Astrocyte of the cerebellum (primary cell): ENCODE measurements at regions of chr10 and their contacts with region 1.

Region 1: DNA sequence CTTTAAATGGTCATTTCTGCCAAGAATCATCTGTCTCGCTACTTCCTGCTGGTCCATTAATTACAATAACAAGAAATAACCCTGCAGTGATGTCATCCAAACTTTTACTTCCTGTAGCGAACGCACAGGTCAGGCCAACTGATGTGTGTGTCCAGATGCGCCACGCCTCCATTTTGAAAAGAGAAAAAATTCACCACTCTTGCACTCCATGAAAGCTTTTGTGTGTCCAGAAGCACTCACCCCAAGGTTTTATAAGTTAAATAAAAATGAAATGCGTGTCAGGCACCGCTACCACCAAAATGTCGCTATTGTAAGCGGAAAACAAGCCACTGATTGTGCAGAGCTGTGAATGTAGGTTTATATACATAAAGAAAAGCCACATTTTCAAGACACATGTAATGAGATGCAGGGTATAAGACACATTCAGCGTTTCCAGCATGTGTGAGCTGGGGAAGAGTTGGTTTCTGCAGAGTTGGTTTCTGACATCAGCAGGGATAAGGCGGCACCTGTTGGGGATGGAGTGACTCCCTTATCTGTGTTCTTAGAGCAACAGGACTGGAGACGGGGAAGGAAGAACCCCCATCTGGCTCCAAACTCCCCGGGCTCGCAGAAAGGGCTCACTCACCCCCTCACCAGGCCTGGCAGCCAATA is 83.3 kb downstream of the CTBP2 start:
- DNase-seq: no peak
- H3K4me3 ChIP-seq: no peak overlapping the region
- CTCF ChIP-seq: no peak

Region 2: DNA sequence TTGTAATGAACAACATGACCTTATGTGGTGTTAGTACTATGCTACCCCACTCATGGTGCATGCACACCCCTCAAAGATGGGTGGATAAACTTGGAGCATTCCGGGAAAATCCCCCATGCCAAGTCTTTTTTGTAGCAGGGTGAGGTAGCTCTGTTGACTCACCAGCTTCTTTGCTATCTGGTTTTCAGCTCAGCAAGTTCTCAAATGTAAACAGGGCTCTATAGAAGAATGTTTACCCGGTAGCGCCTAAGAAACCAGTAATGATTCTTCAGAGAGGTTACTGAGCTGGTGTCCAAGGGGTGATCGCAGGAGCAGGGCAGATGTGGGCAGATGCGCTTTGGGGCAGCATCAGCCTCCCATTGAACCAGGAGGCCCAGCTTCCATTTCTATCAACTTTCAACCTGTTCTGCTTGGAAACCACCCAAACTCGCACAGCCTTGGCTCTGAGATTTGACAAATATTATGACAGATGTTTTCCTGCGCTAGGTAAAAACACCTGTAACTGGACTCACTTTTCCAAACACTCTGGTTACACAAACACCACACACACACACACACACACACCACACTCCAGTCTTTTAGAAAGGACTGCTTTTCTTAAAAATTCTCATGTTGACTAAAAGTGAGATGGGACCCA is 47.3 kb before region 1 on chr10:
- in situ Hi-C with region 1: loop called (anchors 5 kb)
- DNase-seq: no peak
- H3K4me3 ChIP-seq: no peak overlapping the region
- CTCF ChIP-seq: no peak

Region 3: GRCh38 chr10:125124907-125125306 is 47.9 kb after region 1 on chr10:
- in situ Hi-C with region 1: loop called (anchors 5 kb)
- DNase-seq: no peak
- H3K4me3 ChIP-seq: no peak overlapping the region
- CTCF ChIP-seq: no peak